ENCODE measurements at regions of chr17 and their contacts with region 1.

Region 1: GRCh38 chr17:82105882-82106687 is 8.0 kb upstream of the FASN start:
- DNase-seq: peak; percentile 94
- ATAC-seq: peak; percentile 80
- H3K4me3 ChIP-seq: peak overlapping the region; percentile 56 to 82 (median 57)
- H3K27ac ChIP-seq: peak overlapping the region; percentile 72
- H3K4me1 ChIP-seq: peaks cover 79% of the 10 kb centered on the region
- H3K27me3 ChIP-seq: no peaks in the 10 kb centered on the region
- CTCF ChIP-seq: peak; percentile 92
- EP300 ChIP-seq: peak in 1 of 2 experiments; percentile 50; a peak in 1 of 4 replicates
- POLR2A ChIP-seq: peak in 1 of 2 experiments; percentile 94; a peak in 2 of 4 replicates
- RAD21 ChIP-seq: peak; percentile 80

Region 2: DNA sequence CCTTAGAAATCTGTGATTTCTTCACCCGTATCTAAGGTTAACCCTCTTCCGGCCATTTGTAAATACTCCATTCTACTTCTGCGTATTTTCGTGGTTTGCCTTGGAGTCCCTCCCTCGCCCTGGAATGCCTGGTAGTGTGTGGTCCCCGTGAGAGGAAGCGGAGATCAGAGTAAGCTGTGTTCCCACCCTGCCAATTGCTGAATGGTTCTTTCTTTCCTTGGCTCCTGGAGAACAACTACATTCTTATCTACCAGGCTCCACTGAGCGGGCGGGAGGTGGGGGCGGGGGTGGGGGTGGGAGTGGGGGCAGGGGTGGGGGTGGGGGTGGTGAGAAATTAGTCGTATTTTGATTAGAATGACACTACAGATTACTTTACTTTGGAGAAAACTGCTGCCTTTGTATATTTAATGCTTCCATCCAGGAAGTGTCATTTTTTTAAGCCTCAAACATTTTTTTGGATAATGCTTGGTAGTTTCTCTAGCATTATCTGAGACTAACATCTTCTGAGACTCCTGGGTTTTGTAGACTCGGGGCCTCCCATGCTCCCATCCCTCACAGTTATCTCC is 12.8 kb after region 1 on chr17:
- CTCF ChIA-PET with region 1: no interaction called
- POLR2A ChIA-PET with region 1: interaction called, 14 read pairs
- in situ Hi-C with region 1: no loop called
- intact Hi-C with region 1: no loop called
- DNase-seq: peak; percentile 71
- ATAC-seq: no peak
- H3K4me3 ChIP-seq: 0 out of 6 replicates have a peak overlapping the region, but pooled peaks of 1 of the 3 experiments have one; percentile 18
- H3K27ac ChIP-seq: peak overlapping the region; percentile 66
- H3K4me1 ChIP-seq: peaks cover 65% of the 10 kb centered on the region
- H3K27me3 ChIP-seq: no peaks in the 10 kb centered on the region
- CTCF ChIP-seq: no peak
- EP300 ChIP-seq: 0 out of 4 replicates have a peak, but pooled peaks of 1 of the 2 experiments have one; percentile 54
- POLR2A ChIP-seq: no peak
- RAD21 ChIP-seq: no peak

Region 3: GRCh38 chr17:82153745-82154375 is 47.8 kb after region 1 on chr17:
- CTCF ChIA-PET with region 1: interaction called, 16 read pairs
- POLR2A ChIA-PET with region 1: interaction called, 3 read pairs
- in situ Hi-C with region 1: no loop called
- intact Hi-C with region 1: loop called (anchors 1 kb)
- DNase-seq: peak; percentile 74
- ATAC-seq: peak; percentile 92
- H3K4me3 ChIP-seq: no peak overlapping the region
- H3K27ac ChIP-seq: no peak overlapping the region
- H3K4me1 ChIP-seq: peaks cover 7% of the 10 kb centered on the region; the same call in 1 of the 2 replicates
- H3K27me3 ChIP-seq: no peaks in the 10 kb centered on the region
- CTCF ChIP-seq: peak; percentile 100
- EP300 ChIP-seq: no peak
- POLR2A ChIP-seq: no peak
- RAD21 ChIP-seq: peak; percentile 99

Region 4: GRCh38 chr17:82212331-82213250 is 106.5 kb after region 1 on chr17 and contains the start of gene CCDC57:
- CTCF ChIA-PET with region 1: no interaction called
- POLR2A ChIA-PET with region 1: no interaction called
- in situ Hi-C with region 1: no loop called
- intact Hi-C with region 1: no loop called
- DNase-seq: peak; percentile 61
- ATAC-seq: peak; percentile 65
- H3K4me3 ChIP-seq: peak within 1 kb of the TSS; percentile 87 to 98 (median 92)
- H3K27ac ChIP-seq: peak within 1 kb of the TSS; percentile 63
- H3K4me1 ChIP-seq: peaks cover 54% of the 10 kb centered on the region
- H3K27me3 ChIP-seq: no peaks in the 10 kb centered on the region
- CTCF ChIP-seq: no peak
- EP300 ChIP-seq: peak; percentile 20 to 23; a peak in 2 of 4 replicates
- POLR2A ChIP-seq: peak in 1 of 2 experiments; percentile 53; a peak in 1 of 4 replicates
- RAD21 ChIP-seq: 0 out of 2 replicates have a peak, but pooled peaks have one; percentile 58
- total RNA-seq, gene CCDC57: 54.8 and 59.9 TPM in 2 replicates

Region 5: DNA sequence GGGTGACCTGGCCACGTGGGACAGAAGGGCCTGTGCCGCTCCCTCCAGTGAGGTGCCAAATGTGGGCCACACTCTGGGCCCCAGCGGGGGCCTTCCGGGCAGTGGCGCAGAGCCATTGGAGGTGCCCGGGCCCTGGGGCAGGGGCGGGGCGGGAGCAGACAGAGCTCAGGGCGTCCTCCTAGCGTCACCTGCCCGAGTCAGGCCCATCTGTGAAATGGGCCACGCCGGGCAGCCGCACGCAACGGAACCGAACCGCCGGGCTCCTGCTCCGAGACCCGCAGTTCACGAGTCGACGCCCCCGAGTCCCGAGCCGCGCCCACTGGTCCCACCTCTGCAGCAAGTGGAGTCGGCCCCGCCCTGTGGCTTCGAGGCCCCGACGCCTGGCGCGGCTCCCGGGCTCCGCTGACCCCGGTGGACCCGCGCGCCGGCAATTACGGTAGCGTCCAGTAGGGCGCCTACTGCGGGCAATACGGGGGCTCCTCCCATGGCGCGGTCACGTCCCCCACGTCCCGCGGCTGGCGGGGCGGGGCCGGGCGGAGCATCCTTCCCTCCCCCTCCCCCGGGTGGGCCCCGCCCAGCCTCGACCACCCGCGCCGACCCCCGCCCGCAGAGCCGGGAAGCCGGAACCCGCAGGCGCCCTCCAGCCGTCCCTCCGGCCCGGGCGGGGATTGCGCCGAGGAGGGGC is 124.7 kb after region 1 on chr17:
- CTCF ChIA-PET with region 1: no interaction called
- POLR2A ChIA-PET with region 1: interaction called, 7 read pairs
- in situ Hi-C with region 1: no loop called
- intact Hi-C with region 1: loop called (anchors 10 kb)
- DNase-seq: peak; percentile 87
- ATAC-seq: peak; percentile 53
- H3K4me3 ChIP-seq: peak overlapping the region; percentile 76 to 99 (median 97)
- H3K27ac ChIP-seq: peak overlapping the region; percentile 84
- H3K4me1 ChIP-seq: peaks cover 75% of the 10 kb centered on the region
- H3K27me3 ChIP-seq: no peaks in the 10 kb centered on the region; a peak in 1 of 5 replicates
- CTCF ChIP-seq: peak; percentile 61
- EP300 ChIP-seq: peak in 1 of 2 experiments; percentile 53; a peak in 2 of 4 replicates
- POLR2A ChIP-seq: no peak; a peak in 1 of 4 replicates
- RAD21 ChIP-seq: peak; percentile 46; the same call in 1 of the 2 replicates

Measured in HepG2 (cell line).